Activated CD4-positive, alpha-beta T cell treated with anti-CD3 and anti-CD28 coated beads, Interleukin-2, amount 10 ng/mL, durations not matched to agents 24 days and 14 days (primary cell): ENCODE measurements at regions of chr4 and their contacts with region 1.

Region 1: DNA sequence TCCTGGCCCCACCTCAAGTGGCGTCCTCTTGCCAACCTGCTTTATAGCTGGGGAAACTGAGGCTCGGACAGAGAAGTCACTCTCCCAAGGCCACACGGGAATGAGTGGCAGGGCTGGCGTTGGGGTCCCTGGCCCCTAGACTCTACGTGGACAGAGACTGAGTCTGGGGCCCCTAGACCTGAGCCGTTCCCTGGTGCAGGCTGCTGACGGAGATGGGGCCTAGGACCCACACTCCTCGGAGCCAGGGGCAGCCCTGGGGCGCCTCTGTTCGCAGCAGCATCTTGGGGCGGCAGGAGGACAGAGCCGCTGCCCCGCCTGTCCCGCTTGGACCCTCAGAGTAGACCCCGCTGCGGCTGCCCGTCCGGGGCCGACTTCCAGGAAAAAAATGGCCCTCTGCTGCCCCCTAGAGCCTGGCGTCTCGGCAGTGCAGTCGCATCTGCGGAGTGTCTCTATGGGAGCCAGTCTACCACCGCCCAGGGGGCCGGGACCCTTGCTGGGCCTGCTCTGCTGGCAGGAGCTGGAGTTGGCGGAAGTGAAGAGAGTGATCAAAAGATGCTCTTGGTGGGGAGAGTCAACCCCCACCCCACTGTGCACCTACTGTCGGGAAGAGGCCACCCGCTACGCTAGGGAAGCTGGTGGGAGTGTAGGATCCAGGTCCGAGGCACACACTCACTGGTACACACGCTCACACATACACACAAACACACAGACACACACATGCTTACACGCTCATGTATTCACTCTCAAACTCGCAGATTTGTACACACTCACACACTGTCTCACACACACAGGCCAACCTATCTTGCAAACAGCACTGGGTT is 220.1 kb downstream of the AFAP1 start:
- DNase-seq: peak; percentile 86
- H3K4me3 Mint-ChIP-seq: no peak overlapping the region
- H3K27ac Mint-ChIP-seq: no peak overlapping the region
- H3K4me1 Mint-ChIP-seq: no peaks in the 10 kb centered on the region
- H3K27me3 Mint-ChIP-seq: peaks cover 8% of the 10 kb centered on the region

Region 2: DNA sequence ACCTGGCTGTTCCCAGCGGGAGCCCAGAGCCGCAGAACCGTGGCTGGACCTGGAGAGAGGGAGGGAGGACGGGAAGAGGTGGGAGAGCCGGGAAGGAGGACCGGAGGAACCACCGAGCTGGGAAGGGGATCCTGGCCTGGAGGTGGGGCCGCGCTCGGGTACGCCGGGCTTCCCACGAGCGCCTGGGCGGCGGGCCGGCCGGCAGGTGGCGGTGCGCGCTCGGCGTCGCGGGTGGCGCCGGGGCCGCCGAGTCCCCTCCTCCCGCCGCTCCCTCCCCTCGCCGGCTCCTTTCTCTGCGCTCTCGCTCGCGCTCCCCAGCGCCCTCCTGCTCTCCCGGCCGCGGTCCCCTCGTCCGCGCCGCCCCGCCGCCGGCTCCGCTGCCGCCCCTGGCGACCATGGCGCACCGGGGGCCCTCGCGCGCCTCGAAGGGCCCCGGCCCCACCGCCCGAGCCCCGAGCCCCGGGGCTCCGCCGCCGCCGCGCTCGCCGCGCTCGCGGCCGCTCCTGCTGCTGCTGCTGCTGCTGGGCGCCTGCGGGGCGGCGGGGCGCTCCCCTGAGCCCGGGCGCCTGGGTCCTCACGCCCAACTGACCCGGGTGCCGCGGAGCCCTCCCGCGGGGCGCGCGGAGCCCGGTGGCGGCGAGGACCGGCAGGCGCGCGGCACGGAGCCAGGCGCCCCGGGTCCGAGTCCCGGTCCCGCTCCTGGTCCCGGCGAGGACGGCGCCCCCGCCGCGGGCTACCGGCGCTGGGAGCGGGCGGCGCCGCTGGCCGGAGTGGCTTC is 527.1 kb before region 1 on chr4 and contains the start of gene SORCS2:
- intact Hi-C with region 1: loop called (anchors 5 kb)
- DNase-seq: peak; percentile 85
- H3K4me3 Mint-ChIP-seq: peak within 1 kb of the TSS; percentile 51
- H3K27ac Mint-ChIP-seq: no peak within 1 kb of the TSS
- H3K4me1 Mint-ChIP-seq: no peaks in the 10 kb centered on the region
- H3K27me3 Mint-ChIP-seq: peaks cover 55% of the 10 kb centered on the region
- total RNA-seq, gene SORCS2: 0.05 TPM in 1 of 2 replicates, not detected in the other